ENCODE measurements at regions of chr7 and their contacts with region 1.

Region 1: DNA sequence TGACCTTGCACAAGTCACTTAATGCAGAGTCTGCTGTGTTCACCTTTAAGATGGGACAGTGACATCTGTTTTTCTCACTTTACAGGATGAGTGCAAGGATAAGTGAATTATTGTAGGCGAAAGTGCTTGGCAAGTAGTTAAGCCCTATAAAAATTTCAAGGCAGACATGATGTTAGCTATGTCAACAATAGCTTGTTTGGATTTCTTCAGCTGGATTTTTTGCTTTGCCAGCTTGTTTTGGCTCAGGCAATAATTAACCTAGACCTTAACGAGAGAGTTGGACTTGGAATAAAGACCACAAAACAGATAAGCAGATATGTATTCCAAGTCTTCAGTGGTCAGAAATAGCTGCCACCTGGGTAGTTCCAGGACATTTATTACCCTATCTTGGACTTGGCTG is 255.2 kb downstream of the ARL4A start:
- DNase-seq: peak; percentile 62
- ATAC-seq: peak; percentile 82
- H3K4me3 ChIP-seq: no peak overlapping the region
- H3K27ac ChIP-seq: no peak overlapping the region
- H3K4me1 ChIP-seq: peaks cover 33% of the 10 kb centered on the region
- H3K27me3 ChIP-seq: no peaks in the 10 kb centered on the region
- CTCF ChIP-seq: no peak

Region 2: DNA sequence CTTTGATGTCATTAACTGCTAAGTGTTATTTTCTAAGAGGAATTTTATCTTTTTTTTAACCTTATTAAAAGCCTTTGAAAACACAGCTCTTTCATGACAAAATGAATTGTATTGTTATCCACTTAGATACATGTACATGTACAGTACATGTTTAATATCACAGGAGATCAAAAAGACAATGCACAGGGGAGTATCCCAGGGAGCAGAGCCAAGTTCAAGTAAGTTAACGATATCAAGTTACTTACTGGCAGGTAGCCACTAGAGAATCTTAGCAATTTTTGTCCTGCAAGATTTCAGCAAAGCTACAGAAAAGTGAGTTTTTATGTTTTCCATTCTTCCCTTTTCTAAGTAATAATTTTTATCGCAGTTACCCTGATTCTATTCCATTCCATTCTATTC is 289.1 kb before region 1 on chr7:
- CTCF ChIA-PET with region 1: no interaction called
- POLR2A ChIA-PET with region 1: no interaction called
- intact Hi-C with region 1: no loop called
- DNase-seq: peak; percentile 58
- ATAC-seq: peak; percentile 42; the same call in 1 of the 2 replicates
- H3K4me3 ChIP-seq: no peak overlapping the region
- H3K27ac ChIP-seq: 0 out of 2 replicates have a peak overlapping the region, but pooled peaks have one; percentile 19
- H3K4me1 ChIP-seq: peaks cover 43% of the 10 kb centered on the region
- H3K27me3 ChIP-seq: no peaks in the 10 kb centered on the region
- CTCF ChIP-seq: no peak

Region 3: DNA sequence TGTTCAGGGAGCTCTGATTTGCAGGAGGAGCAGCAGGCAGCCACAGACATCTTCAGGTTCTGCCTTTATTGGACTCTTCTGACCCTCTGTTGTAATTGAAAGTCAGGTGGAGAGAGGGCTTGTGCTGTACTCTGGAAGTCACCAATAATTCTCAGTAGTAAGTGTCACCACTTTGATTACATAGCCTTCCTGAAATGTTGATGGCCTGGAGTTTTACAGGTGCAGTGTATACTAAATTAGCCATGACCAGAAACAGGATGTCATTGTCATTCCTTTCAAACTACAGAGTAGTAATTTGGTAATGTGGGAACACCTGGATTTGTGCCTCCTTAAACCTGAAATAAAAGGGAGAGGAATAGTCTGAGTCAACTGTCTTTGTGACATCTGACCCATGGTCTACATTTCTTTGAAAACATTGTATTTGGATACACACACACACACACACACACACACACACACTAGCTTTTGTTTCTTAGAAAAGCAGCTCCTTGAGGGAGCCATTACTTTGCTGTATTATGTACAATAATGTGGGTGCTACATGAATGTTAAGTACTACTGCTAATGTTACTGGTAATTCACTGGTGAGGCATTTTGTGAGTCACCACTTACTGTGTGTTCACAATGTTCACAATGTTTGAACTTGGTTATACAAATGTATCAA is 235.6 kb before region 1 on chr7:
- CTCF ChIA-PET with region 1: no interaction called
- POLR2A ChIA-PET with region 1: no interaction called
- intact Hi-C with region 1: loop called (anchors 1 kb)
- DNase-seq: peak; percentile 91
- ATAC-seq: peak; percentile 84
- H3K4me3 ChIP-seq: peak overlapping the region; percentile 26; the same call in 1 of the 2 replicates
- H3K27ac ChIP-seq: peak overlapping the region; percentile 85
- H3K4me1 ChIP-seq: peaks cover 57% of the 10 kb centered on the region
- H3K27me3 ChIP-seq: no peaks in the 10 kb centered on the region
- CTCF ChIP-seq: no peak

Region 4: GRCh38 chr7:12995912-12996469 is 53.4 kb after region 1 on chr7:
- CTCF ChIA-PET with region 1: no interaction called
- POLR2A ChIA-PET with region 1: no interaction called
- intact Hi-C with region 1: no loop called
- DNase-seq: no peak
- ATAC-seq: no peak
- H3K4me3 ChIP-seq: no peak overlapping the region
- H3K27ac ChIP-seq: no peak overlapping the region
- H3K4me1 ChIP-seq: no peaks in the 10 kb centered on the region
- H3K27me3 ChIP-seq: no peaks in the 10 kb centered on the region
- CTCF ChIP-seq: no peak

Measured in PC-3 (cell line).